Left cardiac atrium (tissue), 4 donors: ENCODE measurements at regions of chr16 and their contacts with region 1.

Region 1: DNA sequence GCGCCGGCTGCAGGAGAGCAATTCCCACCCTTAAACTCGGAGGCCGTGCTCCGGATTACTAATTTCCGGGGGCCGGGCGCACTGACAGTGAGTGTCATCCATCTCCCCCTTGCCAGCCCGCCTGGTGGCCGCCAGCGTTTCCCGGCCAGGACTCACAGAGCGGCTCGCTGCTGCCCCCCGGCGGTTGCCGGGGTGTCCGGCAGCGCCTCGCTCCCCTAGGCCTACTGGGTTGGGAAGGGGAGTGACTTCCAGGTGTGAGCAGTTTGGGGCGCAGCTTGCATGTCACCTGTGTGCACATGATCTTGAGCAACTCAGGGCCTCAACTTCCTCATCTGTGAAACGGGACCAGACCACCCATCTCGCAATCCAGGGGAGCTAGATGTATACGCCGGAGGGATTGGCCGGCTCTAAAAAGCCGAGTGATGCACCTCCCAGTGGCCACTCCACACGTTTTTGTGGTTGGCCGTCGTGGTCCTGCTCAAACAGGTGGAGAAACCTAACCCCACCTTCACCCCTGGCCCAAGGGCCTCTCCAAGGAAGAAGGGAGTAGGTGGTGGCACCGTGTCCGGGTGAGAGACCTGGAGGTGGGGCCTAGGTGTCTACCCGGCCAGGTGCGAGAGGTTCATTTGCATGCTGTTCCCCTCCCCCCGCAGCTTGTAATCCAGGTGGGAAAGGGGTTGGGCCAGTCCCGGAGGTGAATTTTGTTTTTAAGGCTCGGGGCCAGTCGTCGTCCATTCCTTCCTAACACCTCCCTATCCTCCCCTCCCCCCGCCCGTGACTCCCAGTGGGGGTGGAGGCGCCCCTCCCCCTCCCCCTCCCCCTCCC is 2.4 kb upstream of the GSE1 start:
- DNase-seq: peak; percentile 89
- ATAC-seq: peak; percentile 38 to 39

Region 2: GRCh38 chr16:85275533-85276249 is 335.0 kb before region 1 on chr16:
- intact Hi-C with region 1: loop called in 1 of 2 experiments (anchors 10 kb)
- DNase-seq: peak; percentile 69
- ATAC-seq: peak; percentile 60 to 74

Region 3: DNA sequence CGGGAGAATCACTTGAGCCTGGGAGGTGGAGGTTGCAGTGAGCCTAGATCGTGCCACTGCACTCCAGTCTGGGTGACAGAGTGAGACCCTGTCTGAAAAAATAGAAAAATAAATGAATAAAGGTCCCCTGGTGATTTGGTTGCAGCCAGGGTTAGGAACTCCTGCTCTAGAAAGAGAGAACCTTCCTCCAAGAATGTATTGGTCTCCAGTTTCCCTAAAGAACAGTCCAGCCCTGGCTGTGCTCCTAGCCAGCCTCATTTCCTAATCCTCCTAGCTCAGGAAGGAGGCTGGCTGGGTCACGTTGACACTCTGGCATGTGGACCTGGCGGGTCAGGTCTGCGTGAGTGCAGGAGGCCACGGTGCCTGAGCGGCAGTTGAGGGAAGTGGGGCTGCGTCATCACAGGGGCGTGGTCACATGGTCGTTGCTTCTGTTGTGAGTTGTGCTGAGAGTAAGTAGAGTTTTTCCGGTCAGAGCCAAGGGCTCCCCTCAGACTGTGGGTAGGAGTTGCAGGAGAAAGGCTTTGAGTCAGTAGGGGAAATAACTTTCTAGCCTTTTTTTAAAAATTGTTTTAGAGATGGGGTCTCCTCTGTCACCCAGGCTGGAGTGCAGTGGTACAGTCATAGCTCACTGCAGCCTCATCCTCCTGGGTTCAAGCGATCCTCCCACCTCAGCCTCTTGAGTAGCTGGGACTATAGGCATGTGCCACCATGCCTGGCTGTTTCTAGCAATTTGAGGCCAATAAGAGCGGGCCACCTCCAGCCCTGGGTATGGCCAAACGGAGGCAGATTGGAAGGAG is 304.5 kb before region 1 on chr16:
- intact Hi-C with region 1: loop called in 1 of 2 experiments (anchors 10 kb)
- DNase-seq: peak; percentile 94
- ATAC-seq: peak; percentile 51 to 53

Region 4: DNA sequence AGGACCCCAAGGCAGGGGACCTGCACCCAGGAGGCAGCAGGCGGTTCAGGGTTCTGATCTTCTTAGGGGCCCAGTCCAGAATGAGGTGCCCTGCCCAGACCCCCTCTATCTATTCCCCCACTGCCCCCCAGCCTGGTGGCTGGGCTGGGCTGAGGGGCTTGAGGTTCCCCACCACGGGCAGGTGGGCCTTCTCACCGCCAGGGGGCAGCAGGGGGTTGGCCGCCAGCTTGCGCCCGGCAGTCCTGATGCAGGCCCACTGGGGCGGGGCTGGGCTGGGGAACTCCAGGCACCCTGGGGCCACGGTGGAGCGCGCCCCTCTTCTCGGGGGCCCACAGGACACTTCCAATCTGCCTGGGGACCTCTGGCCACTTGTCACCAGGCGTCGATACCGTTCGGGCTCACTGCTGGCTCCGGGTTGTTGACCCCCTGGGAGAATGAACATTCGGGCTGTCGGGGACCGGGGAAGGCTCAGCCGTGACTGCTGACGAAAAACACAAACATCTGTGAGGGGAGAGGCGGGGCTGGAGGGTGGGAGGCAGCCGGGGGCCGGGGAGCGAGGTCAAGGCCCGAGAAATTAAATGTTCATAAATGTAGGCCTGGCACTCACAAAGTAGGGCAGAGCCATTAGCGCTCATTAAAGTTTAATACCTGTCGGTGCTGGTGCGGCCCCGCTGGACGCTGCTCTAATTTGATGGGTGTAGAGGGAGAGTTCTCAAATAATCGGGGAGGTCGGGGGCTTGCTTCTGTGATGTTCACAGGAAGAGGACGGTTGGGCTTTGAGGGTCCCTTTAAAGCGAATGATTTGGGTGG is 216.8 kb before region 1 on chr16:
- intact Hi-C with region 1: loop called (anchors 10 kb)
- DNase-seq: peak; percentile 73
- ATAC-seq: no peak

Region 5: GRCh38 chr16:85420501-85421337 is 190.0 kb before region 1 on chr16:
- intact Hi-C with region 1: loop called (anchors 2 to 10 kb)
- DNase-seq: peak; percentile 68
- ATAC-seq: peak; percentile 61 to 68

Region 6: DNA sequence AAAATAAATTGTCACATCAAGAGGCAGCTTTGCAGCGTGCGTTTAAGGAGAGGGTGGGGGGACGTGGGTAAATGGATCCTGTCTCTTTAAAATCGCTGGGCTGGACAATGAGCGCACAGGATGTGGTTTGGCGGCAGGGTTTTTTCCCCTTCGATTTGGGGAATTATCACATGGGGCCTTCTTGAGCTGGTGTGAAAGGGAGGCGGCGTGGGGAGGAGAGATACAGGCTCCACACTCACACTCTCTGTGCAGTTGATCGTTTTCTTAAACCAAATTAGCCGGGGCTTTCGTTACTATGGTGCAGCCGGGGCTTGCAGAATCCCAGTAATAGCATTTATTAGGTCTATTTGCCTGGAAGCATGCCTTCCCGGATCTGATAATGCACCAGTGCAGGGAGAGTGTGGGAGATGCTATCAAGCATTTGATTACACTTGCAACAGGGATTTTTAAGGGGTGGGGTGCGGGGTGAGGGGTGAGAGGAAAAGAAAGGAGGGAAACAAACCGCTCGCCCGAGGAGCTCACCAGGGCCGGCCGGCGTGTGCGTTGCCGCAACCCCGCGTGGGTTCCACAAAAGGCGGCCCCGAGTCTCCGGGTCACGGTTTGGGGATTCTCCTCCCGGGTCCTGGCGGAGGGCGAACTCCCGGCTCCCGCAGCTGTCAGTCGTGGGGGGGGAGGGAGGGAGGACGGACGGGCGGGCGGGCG is 56.5 kb before region 1 on chr16:
- intact Hi-C with region 1: loop called (anchors 5 to 10 kb)
- DNase-seq: peak; percentile 70
- ATAC-seq: peak; percentile 58 to 67